Activated CD4-positive, alpha-beta memory T cell treated with anti-CD3 and anti-CD28 coated beads, Interleukin-2, amount 10 ng/mL, durations not matched to agents 7 days and 5 days (primary cell): ENCODE measurements at regions of chr19 and their contacts with region 1.

Region 1: GRCh38 chr19:36214386-36215275 is at the starts of genes ZNF146 and ZNF565:
- DNase-seq: peak; percentile 97
- H3K4me3 Mint-ChIP-seq: no peak within 1 kb of the TSS
- H3K27ac Mint-ChIP-seq: no peak within 1 kb of the TSS
- H3K4me1 Mint-ChIP-seq: peaks cover 19% of the 10 kb centered on the region
- H3K27me3 Mint-ChIP-seq: no peaks in the 10 kb centered on the region
- total RNA-seq, gene ZNF146: 64.6 to 68.4 TPM
- total RNA-seq, gene ZNF565: 2.0 to 3.5 TPM

Region 2: GRCh38 chr19:36114763-36115452 is 99.7 kb before region 1 on chr19 and contains the start of gene POLR2I:
- CTCF ChIA-PET with region 1: interaction called, 3 read pairs
- POLR2A ChIA-PET with region 1: interaction called, 15 read pairs
- DNase-seq: peak; percentile 99
- H3K4me3 Mint-ChIP-seq: peak within 1 kb of the TSS; percentile 92
- H3K27ac Mint-ChIP-seq: peak within 1 kb of the TSS; percentile 95
- H3K4me1 Mint-ChIP-seq: peaks cover 47% of the 10 kb centered on the region
- H3K27me3 Mint-ChIP-seq: no peaks in the 10 kb centered on the region
- total RNA-seq, gene POLR2I: 47.3 to 57.4 TPM

Region 3: GRCh38 chr19:36152352-36153091 is 62.1 kb before region 1 on chr19 and contains the start of gene COX7A1:
- CTCF ChIA-PET with region 1: no interaction called
- POLR2A ChIA-PET with region 1: no interaction called
- DNase-seq: no peak
- H3K4me3 Mint-ChIP-seq: no peak within 1 kb of the TSS
- H3K27ac Mint-ChIP-seq: no peak within 1 kb of the TSS
- H3K4me1 Mint-ChIP-seq: peaks cover 3% of the 10 kb centered on the region
- H3K27me3 Mint-ChIP-seq: no peaks in the 10 kb centered on the region
- total RNA-seq, gene COX7A1: not detected

Region 4: DNA sequence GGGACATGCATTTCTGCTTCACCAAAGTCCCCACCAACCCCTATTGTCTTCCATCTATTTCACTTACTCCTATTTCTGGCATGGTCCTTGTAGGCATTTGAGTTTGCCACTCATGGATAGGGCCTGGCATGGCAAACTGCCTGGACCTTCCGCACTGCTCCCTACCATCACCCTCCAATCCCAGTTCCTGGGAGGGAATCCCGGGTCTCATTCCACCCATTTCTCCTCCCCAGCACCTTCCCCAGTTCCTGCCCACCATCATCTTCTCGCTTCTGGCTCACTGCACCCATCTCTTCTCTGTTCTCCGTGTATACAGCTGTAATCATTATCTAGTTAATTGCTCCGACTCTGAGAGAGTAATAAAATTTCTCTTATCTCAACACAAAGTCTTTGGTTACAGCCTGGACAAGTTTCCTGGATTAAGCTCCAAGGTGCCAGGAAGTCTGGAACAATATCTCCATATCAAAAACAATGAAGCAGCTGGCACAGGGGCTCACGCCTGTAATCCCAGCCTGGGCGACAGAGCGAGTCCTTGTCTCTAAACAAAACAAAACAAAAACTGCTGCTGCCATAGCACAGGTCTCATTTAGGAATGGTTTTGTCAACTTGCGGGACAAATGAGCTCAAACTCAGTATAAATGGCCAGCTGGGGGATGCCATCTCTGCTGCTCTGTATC is 45.4 kb before region 1 on chr19:
- CTCF ChIA-PET with region 1: interaction called, 11 read pairs
- POLR2A ChIA-PET with region 1: interaction called, 6 read pairs
- DNase-seq: no peak
- H3K4me3 Mint-ChIP-seq: no peak overlapping the region
- H3K27ac Mint-ChIP-seq: no peak overlapping the region
- H3K4me1 Mint-ChIP-seq: peaks cover 5% of the 10 kb centered on the region
- H3K27me3 Mint-ChIP-seq: no peaks in the 10 kb centered on the region

Region 5: DNA sequence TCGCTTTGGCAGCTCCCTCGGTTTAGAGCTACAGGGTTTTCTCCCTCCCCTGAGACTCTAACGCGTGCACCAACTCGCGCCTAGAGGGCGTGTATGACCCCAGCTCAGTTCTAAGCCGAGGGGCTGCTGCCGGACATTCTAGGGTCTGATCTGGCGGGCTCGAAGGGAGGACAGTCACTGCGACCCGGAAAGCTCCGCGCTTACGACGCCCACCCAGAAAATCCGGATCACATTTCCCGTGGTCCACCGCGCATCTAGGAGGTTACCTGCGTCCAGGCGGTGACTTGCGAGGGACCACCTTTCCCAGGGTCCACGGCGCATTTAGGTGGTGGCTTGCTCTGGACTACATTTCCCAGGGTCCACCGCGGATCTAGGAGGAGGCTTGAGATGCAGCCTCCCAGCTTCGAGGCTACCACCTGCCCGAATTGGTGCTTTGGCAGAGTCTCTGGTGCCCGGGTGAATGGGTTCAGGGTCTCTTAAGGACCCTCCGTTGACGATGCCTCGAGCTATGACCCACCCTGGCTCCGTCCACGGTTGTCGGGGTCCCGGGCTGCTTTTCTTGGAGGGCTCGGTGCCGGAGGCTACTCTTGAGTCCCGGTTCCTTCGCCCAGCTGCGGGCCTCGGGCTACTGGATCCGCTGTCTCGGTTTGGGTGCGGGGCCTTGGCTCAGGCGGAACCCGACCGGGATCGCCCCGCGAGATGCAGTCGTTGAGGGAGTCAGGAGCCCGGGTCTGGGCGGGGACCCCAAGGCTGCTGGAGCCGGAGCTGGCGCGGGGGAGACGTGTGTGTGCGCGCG is 30.8 kb after region 1 on chr19:
- CTCF ChIA-PET with region 1: no interaction called
- POLR2A ChIA-PET with region 1: no interaction called
- DNase-seq: no peak
- H3K4me3 Mint-ChIP-seq: no peak overlapping the region
- H3K27ac Mint-ChIP-seq: no peak overlapping the region
- H3K4me1 Mint-ChIP-seq: peaks cover 3% of the 10 kb centered on the region
- H3K27me3 Mint-ChIP-seq: peaks cover 2% of the 10 kb centered on the region

Region 6: GRCh38 chr19:36489118-36489919 is 274.7 kb after region 1 on chr19 and contains the start of gene ZNF566:
- CTCF ChIA-PET with region 1: no interaction called
- POLR2A ChIA-PET with region 1: interaction called, 21 read pairs
- DNase-seq: peak; percentile 92
- H3K4me3 Mint-ChIP-seq: peak within 1 kb of the TSS; percentile 95
- H3K27ac Mint-ChIP-seq: peak within 1 kb of the TSS; percentile 97
- H3K4me1 Mint-ChIP-seq: peaks cover 26% of the 10 kb centered on the region
- H3K27me3 Mint-ChIP-seq: no peaks in the 10 kb centered on the region
- total RNA-seq, gene ZNF566: 8.5 to 8.7 TPM

Region 7: GRCh38 chr19:36850559-36851442 is 636.2 kb after region 1 on chr19 and contains the start of gene ZNF345:
- CTCF ChIA-PET with region 1: no interaction called
- POLR2A ChIA-PET with region 1: interaction called, 10 read pairs
- DNase-seq: peak; percentile 89
- H3K4me3 Mint-ChIP-seq: no peak within 1 kb of the TSS
- H3K27ac Mint-ChIP-seq: no peak within 1 kb of the TSS
- H3K4me1 Mint-ChIP-seq: peaks cover 6% of the 10 kb centered on the region
- H3K27me3 Mint-ChIP-seq: no peaks in the 10 kb centered on the region
- total RNA-seq, gene ZNF345: 6.0 to 6.3 TPM